ENCODE measurements at regions of chr1 and their contacts with region 1.

Region 1: GRCh38 chr1:241475671-241476070 is 43.9 kb downstream of the FH start:
- DNase-seq: no peak
- H3K4me3 Mint-ChIP-seq: no peak overlapping the region
- H3K27ac Mint-ChIP-seq: no peak overlapping the region
- H3K4me1 Mint-ChIP-seq: no peaks in the 10 kb centered on the region
- H3K27me3 Mint-ChIP-seq: no peaks in the 10 kb centered on the region
- CTCF ChIP-seq: no peak

Region 2: GRCh38 chr1:241464985-241465384 is 10.7 kb before region 1 on chr1:
- CTCF ChIA-PET with region 1: interaction called, 10 read pairs
- POLR2A ChIA-PET with region 1: interaction called, 3 read pairs
- intact Hi-C with region 1: no loop called
- DNase-seq: no peak
- H3K4me3 Mint-ChIP-seq: no peak overlapping the region
- H3K27ac Mint-ChIP-seq: no peak overlapping the region
- H3K4me1 Mint-ChIP-seq: peaks cover 7% of the 10 kb centered on the region
- H3K27me3 Mint-ChIP-seq: no peaks in the 10 kb centered on the region
- CTCF ChIP-seq: no peak

Region 3: DNA sequence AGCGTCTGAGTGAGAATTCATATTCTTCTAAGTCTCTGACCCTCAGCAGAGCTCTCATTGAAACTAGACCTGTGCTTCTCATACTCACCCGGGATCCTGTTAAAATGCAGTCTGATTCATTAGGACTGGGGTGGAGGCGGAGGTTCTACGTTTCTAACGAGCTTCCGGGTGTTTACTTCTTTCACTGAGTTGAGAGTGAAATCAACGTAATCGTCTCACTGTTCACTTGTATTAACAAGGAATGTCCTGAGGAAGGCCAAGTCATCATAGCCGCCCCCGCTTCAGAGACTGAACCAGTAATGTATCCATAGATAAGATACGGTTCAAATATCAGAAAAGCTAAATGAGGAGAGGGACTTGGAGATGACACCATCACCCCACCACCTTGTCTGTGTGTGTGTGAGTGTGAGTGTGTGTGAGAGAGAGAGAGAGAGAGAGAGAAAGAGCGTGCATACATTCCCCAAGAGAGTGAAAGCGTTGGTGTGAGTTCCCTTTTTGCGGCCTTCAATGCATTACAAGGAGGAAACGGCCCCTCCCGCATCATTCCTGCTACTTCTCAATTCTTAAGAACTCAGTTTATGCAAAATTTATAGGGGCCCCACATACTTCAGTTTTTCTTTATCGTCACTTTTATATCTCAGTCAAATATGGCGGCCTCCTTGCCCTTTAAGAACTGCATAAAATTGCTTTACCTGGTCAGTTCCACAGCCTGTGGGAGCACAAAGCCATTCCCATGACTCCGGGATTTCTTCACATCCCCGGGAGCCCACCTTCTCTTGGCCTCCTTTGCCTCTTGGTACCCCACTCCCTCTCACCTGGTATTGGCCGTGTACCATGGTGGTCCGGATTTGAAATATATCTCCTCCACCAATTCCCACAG is 76.3 kb after region 1 on chr1:
- CTCF ChIA-PET with region 1: no interaction called
- POLR2A ChIA-PET with region 1: no interaction called
- intact Hi-C with region 1: no loop called
- DNase-seq: no peak
- H3K4me3 Mint-ChIP-seq: no peak overlapping the region
- H3K27ac Mint-ChIP-seq: no peak overlapping the region
- H3K4me1 Mint-ChIP-seq: no peaks in the 10 kb centered on the region
- H3K27me3 Mint-ChIP-seq: no peaks in the 10 kb centered on the region
- CTCF ChIP-seq: no peak